Activated T-helper 2 cell treated with anti-CD3 and anti-CD28 coated beads, Interferon-gamma antibody, Interleukin-2, Interleukin-4, amounts not matched to agents 10 μg/mL and 5 μg/mL and 100 μg/mL, durations not matched to agents 14 hours and 24 hours and 36 hours (primary cell): ENCODE measurements at regions of chr5 and their contacts with region 1.

Region 1: GRCh38 chr5:143693651-143694252 is 118.2 kb upstream of the HMHB1 start:
- DNase-seq: peak; percentile 11
- H3K4me3 Mint-ChIP-seq: no peak overlapping the region
- H3K27ac Mint-ChIP-seq: peak overlapping the region; percentile 68
- H3K4me1 Mint-ChIP-seq: peaks cover 57% of the 10 kb centered on the region
- H3K27me3 Mint-ChIP-seq: no peaks in the 10 kb centered on the region

Region 2: DNA sequence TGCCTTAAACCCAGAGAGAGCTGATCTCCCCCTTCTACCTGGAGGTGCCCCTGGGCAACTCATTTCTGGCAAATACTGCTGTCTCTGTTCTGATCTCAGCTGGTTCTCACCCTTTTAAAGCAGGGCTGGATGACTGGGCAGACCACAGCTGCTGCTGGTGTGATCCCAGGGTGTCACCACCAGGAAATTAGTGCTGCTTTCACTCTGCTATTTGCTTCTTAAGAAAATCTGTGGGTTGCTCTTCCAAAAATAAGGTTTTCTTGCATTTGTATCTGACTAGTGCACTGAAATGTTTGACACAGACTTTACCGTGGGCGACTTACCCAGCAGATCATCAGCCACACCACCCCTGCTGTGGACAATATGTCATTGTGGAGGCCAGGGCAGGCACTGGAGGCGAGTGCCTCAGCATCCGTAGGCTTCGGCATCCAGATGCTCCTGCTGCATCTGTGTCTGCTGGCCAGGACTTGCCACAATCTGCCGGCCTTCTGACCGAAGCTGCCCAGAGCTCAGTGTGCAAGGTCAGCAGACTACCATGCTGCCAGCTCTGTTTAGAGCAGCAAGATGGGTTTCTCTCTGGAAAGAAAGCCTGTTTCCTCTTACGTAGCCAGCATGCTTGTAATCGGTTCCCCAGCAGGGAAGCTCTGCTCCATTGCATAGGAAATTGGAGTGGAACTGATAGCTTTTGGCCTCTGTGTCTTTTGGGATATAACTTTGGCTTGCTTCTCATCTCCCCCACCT is 910.0 kb before region 1 on chr5:
- intact Hi-C with region 1: loop called (anchors 5 kb)
- DNase-seq: peak; percentile 35
- H3K4me3 Mint-ChIP-seq: peak overlapping the region; percentile 27
- H3K27ac Mint-ChIP-seq: peak overlapping the region; percentile 86
- H3K4me1 Mint-ChIP-seq: peaks cover 66% of the 10 kb centered on the region
- H3K27me3 Mint-ChIP-seq: no peaks in the 10 kb centered on the region

Region 3: DNA sequence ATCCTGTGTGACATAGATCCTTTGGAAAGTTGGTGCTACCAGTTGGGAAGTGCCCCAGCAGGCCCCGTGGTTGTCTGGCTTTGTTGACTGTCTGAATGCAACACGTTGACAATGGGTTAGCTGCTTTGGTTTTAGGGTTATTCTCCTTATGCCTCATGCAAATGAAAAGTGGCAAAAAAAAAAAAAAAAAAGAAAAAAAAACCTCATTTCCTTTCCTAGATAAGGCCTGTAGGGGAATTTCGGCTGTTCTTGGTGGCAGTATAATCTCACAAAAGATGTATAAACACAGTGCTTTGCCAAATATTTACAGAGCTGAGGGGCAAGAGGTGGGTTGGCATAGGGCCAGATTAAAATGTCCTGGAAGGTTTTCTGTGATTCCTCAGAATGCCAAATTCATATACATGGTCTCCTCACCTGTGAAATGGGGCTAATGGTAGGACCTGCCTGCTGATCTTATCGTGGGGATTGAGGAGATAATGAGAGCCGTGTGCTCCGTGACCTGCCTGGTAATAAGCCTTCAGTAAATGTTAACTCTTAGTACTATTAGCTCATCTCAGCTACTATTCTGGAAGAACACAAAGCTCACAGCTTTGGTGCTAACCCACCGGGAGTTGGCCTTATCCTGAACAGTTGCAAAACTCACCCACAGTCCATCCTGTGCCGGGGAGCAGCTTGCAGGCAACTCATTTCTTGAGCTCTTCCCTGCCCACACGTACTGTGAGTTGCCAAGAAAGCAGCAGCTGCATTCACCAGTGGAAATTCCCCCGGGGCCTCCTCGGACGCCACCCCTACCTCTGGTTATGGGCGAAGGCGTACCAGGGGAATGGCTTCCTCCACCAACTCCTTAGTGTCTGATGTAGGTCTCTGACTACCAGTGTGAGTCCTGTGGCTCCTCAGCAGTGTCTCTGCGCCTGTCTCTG is 510.6 kb before region 1 on chr5:
- intact Hi-C with region 1: loop called (anchors 10 kb)
- DNase-seq: peak; percentile 33
- H3K4me3 Mint-ChIP-seq: peak overlapping the region; percentile 43
- H3K27ac Mint-ChIP-seq: peak overlapping the region; percentile 82
- H3K4me1 Mint-ChIP-seq: peaks cover 61% of the 10 kb centered on the region
- H3K27me3 Mint-ChIP-seq: no peaks in the 10 kb centered on the region

Region 4: GRCh38 chr5:143585970-143586369 is 107.8 kb before region 1 on chr5:
- intact Hi-C with region 1: loop called (anchors 5 kb)
- DNase-seq: no peak
- H3K4me3 Mint-ChIP-seq: peak overlapping the region; percentile 6
- H3K27ac Mint-ChIP-seq: peak overlapping the region; percentile 71
- H3K4me1 Mint-ChIP-seq: peaks cover 61% of the 10 kb centered on the region
- H3K27me3 Mint-ChIP-seq: no peaks in the 10 kb centered on the region

Region 5: DNA sequence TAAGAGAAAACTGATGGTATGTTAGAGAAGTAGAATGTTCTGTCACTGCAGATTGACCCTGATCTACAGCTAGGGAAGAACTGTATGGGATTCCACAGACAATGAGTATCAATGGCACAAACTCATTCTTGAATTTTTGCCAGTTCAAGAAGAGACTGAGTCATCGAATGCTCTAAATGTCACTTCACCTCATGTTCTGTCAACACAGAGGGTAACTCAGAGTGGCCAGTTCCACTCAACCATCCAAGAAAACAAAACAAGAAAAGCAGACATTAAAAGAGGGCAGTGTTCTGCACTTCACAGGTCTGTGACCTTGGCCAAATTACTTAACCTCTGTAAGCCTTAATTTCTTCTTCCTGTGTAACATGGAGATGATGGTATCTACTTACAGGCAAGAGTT is 14.0 kb before region 1 on chr5:
- intact Hi-C with region 1: loop called (anchors 1 kb)
- DNase-seq: no peak
- H3K4me3 Mint-ChIP-seq: no peak overlapping the region
- H3K27ac Mint-ChIP-seq: peak overlapping the region; percentile 71
- H3K4me1 Mint-ChIP-seq: peaks cover 27% of the 10 kb centered on the region
- H3K27me3 Mint-ChIP-seq: no peaks in the 10 kb centered on the region

Region 6: GRCh38 chr5:144254552-144254951 is 560.8 kb after region 1 on chr5:
- intact Hi-C with region 1: no loop called
- DNase-seq: no peak
- H3K4me3 Mint-ChIP-seq: no peak overlapping the region
- H3K27ac Mint-ChIP-seq: no peak overlapping the region
- H3K4me1 Mint-ChIP-seq: no peaks in the 10 kb centered on the region
- H3K27me3 Mint-ChIP-seq: no peaks in the 10 kb centered on the region